BJ (cell line): ENCODE measurements at regions of chr3 and their contacts with region 1.

Region 1: DNA sequence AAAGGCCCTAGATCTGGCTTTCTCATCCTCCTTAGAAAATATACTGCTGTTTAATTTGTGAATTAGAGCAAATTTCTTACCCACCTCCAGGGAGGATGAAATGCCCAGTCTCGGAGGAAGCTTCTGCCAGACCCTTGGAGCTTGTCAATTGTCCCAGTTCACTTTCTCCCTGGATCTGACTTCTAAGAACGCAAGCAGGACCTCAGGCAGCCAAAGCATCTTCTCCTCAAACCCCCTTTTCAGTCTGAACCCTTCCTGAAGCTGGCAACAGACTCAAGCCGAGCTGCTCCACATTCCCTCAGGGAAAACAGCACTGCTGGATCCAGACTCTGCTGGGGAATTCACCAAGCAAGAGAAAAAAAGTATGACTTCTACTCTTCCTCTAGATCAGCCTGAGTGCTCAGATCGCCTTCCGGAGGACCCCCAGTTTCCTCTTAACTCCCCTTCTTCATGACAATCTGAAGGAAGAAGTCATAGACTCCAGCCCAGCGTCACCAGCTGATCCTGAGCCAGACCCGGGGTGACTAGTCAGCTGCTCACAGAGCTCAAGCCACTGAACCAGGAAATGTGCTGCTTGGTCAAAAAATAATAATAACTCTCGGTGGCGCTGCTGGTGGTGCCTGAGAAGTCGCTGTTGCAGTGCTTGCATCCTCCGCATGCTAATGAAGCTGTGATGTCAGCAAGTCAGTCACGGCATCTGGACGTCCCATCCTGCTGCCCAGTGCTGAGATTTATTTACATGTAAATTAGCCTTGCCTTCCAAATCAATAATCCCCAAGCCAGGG is at the start of gene PRICKLE2:
- DNase-seq: peak; percentile 74
- H3K4me3 ChIP-seq: peak within 1 kb of the TSS; percentile 44
- H3K27me3 ChIP-seq: no peaks in the 10 kb centered on the region
- CTCF ChIP-seq: peak; percentile 40
- polyA plus RNA-seq, gene PRICKLE2: 3.5 and 3.9 TPM in 2 replicates

Region 2: GRCh38 chr3:64266065-64266931 is 41.3 kb after region 1 on chr3:
- CTCF ChIA-PET with region 1: interaction called, 11 read pairs
- POLR2A ChIA-PET with region 1: no interaction called
- DNase-seq: peak; percentile 92
- H3K4me3 ChIP-seq: peak overlapping the region; percentile 76
- H3K27me3 ChIP-seq: no peaks in the 10 kb centered on the region
- CTCF ChIP-seq: no peak

Region 3: DNA sequence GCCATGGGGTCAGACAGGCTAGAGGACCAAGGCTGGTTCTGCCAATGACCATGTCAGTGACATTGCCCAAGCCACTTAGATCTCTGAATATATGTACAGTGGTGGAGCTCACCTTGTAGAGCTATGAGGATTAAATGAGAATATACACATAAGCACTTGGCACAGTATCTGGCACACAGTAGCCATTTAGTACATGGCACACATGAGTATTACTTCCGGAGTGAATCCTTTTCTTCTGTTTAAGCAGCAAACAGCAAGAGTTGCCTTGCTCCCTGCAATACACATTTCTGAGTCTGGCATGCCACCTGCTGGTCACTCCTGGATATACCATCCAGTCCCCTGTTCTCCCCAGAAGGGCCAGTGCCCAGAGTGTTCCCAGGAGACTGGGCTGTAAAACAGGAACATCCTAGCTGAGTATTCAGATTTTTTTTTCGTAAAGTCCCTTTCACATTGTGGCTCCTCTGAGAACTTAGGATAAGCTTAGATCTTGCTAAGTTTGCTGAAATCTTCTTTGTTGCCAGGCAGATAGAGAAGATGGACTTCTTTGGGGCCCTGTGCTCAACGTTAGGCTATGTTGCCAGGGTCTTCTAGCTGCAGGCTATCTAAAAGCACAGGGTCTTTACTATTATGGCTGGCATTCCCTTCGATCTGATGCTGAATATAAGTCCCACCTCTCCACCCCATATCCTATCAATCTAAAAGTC is 259.4 kb after region 1 on chr3:
- CTCF ChIA-PET with region 1: interaction called, 12 read pairs
- POLR2A ChIA-PET with region 1: no interaction called
- DNase-seq: peak; percentile 13
- H3K4me3 ChIP-seq: no peak overlapping the region
- H3K27me3 ChIP-seq: peaks cover 2% of the 10 kb centered on the region
- CTCF ChIP-seq: peak; percentile 80